T-cell (primary cell): ENCODE measurements at regions of chr19 and their contacts with region 1.

Region 1: GRCh38 chr19:13093407-13094105 is 9.1 kb downstream of the LYL1 start:
- DNase-seq: peak; percentile 63 to 90 (median 78)
- ATAC-seq: peak; percentile 66 to 76 (median 70)
- H3K4me3 ChIP-seq: no peak overlapping the region
- H3K4me3 Mint-ChIP-seq: no peak overlapping the region
- H3K27ac ChIP-seq: no peak overlapping the region
- H3K27ac Mint-ChIP-seq: no peak overlapping the region
- H3K4me1 ChIP-seq: peaks cover 17 to 44% of the 10 kb centered on the region in 2 experiments
- H3K4me1 Mint-ChIP-seq: peaks cover 18 to 30% (median 28%) of the 10 kb centered on the region in 3 donors
- H3K27me3 ChIP-seq: peaks cover 0 to 50% of the 10 kb centered on the region in 2 experiments
- H3K27me3 Mint-ChIP-seq: peaks cover 5 to 15% of the 10 kb centered on the region in 2 donors

Region 2: GRCh38 chr19:12938234-12939025 is 155.1 kb before region 1 on chr19 and contains the start of gene CALR:
- CTCF ChIA-PET with region 1: no interaction called
- POLR2A ChIA-PET with region 1: interaction called in 1 of 2 experiments, 16 read pairs
- DNase-seq: peak; percentile 96 to 100 (median 98)
- ATAC-seq: peak; percentile 88 to 91 (median 90)
- H3K4me3 ChIP-seq: peak within 1 kb of the TSS; percentile 82 to 94
- H3K4me3 Mint-ChIP-seq: peak within 1 kb of the TSS; percentile 98 to 99 (median 99)
- H3K27ac ChIP-seq: peak within 1 kb of the TSS; percentile 30
- H3K27ac Mint-ChIP-seq: peak within 1 kb of the TSS; percentile 92 to 95
- H3K4me1 ChIP-seq: peaks cover 27 to 72% of the 10 kb centered on the region in 2 experiments
- H3K4me1 Mint-ChIP-seq: peaks cover 57 to 64% (median 62%) of the 10 kb centered on the region in 3 donors
- H3K27me3 ChIP-seq: no peaks in the 10 kb centered on the region
- H3K27me3 Mint-ChIP-seq: no peaks in the 10 kb centered on the region
- total RNA-seq, gene CALR: 429 to 530 (median 501) TPM

Region 3: GRCh38 chr19:12965017-12965811 is 128.3 kb before region 1 on chr19:
- CTCF ChIA-PET with region 1: interaction called, 3 to 13 read pairs
- POLR2A ChIA-PET with region 1: no interaction called
- DNase-seq: peak; percentile 47 to 88 (median 71)
- ATAC-seq: peak; percentile 94 to 98 (median 97)
- H3K4me3 ChIP-seq: peak overlapping the region; percentile 47 to 79
- H3K4me3 Mint-ChIP-seq: peak overlapping the region; percentile 83 to 95 (median 86)
- H3K27ac ChIP-seq: no peak overlapping the region
- H3K27ac Mint-ChIP-seq: peak overlapping the region; percentile 65 to 76
- H3K4me1 ChIP-seq: peaks cover 0 to 11% of the 10 kb centered on the region in 2 experiments
- H3K4me1 Mint-ChIP-seq: peaks cover 5 to 12% (median 6%) of the 10 kb centered on the region in 3 donors
- H3K27me3 ChIP-seq: no peaks in the 10 kb centered on the region
- H3K27me3 Mint-ChIP-seq: no peaks in the 10 kb centered on the region

Region 4: GRCh38 chr19:12974301-12975220 is 119.0 kb before region 1 on chr19:
- CTCF ChIA-PET with region 1: interaction called, 9 to 14 read pairs
- POLR2A ChIA-PET with region 1: no interaction called
- DNase-seq: no peak
- ATAC-seq: no peak
- H3K4me3 ChIP-seq: no peak overlapping the region
- H3K4me3 Mint-ChIP-seq: no peak overlapping the region
- H3K27ac ChIP-seq: no peak overlapping the region
- H3K27ac Mint-ChIP-seq: no peak overlapping the region
- H3K4me1 ChIP-seq: peaks cover 0 to 6% of the 10 kb centered on the region in 2 experiments
- H3K4me1 Mint-ChIP-seq: peaks cover 0 to 7% (median 3%) of the 10 kb centered on the region in 3 donors
- H3K27me3 ChIP-seq: peaks cover 0 to 38% of the 10 kb centered on the region in 2 experiments
- H3K27me3 Mint-ChIP-seq: peaks cover 12 to 14% of the 10 kb centered on the region in 2 donors

Region 5: DNA sequence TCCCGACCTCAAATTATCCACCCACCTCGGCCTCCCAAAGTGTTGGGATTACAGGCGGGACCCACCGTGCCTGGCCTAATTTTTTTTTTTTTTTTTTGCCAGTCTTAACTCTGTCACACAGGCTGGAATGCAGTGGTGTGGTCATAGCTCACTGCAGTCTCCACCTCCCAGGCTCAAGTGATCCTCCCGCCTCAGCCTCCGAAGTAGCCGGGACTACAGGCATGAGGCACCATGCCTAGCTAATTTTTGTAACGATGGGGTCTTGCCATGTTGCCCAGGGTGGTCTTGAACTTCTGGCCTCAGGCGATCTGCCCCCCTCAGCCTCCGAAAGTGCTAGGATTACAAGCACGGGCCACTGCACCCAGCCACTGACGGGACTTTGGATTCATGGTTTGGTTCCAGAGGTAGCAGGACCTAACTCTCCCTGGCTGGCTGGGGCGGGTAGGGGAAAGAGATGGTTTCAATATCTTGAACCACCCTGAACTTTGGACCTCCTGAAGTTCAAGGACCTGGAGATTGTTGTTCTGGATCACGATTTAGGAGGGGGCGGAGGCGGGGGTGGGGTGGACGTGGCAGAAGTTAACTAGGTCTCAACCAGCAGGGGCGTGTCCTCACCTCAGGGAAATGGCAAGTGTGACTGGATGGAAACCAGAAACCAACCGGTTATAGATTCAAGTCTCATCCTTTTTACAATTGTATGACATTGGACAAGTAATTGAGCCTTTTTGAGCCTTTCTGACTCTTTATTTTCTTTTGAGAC is 97.4 kb after region 1 on chr19:
- CTCF ChIA-PET with region 1: no interaction called
- POLR2A ChIA-PET with region 1: no interaction called
- DNase-seq: no peak
- ATAC-seq: no peak
- H3K4me3 ChIP-seq: no peak overlapping the region
- H3K4me3 Mint-ChIP-seq: no peak overlapping the region
- H3K27ac ChIP-seq: no peak overlapping the region
- H3K27ac Mint-ChIP-seq: peak overlapping the region in 1 of 2 donors; percentile 15
- H3K4me1 ChIP-seq: peaks cover 7 to 63% of the 10 kb centered on the region in 2 experiments
- H3K4me1 Mint-ChIP-seq: peaks cover 35 to 52% (median 40%) of the 10 kb centered on the region in 3 donors
- H3K27me3 ChIP-seq: no peaks in the 10 kb centered on the region
- H3K27me3 Mint-ChIP-seq: no peaks in the 10 kb centered on the region